ENCODE measurements at regions of chr6 and their contacts with region 1.

Region 1: GRCh38 chr6:13336553-13336952 is 8.2 kb upstream of the TBC1D7 start:
- DNase-seq: peak; percentile 95
- H3K4me3 ChIP-seq: no peak overlapping the region
- H3K27ac ChIP-seq: peak overlapping the region; percentile 43
- H3K4me1 ChIP-seq: peaks cover 9% of the 10 kb centered on the region
- H3K27me3 ChIP-seq: no peaks in the 10 kb centered on the region
- CTCF ChIP-seq: peak; percentile 80 to 88

Region 2: DNA sequence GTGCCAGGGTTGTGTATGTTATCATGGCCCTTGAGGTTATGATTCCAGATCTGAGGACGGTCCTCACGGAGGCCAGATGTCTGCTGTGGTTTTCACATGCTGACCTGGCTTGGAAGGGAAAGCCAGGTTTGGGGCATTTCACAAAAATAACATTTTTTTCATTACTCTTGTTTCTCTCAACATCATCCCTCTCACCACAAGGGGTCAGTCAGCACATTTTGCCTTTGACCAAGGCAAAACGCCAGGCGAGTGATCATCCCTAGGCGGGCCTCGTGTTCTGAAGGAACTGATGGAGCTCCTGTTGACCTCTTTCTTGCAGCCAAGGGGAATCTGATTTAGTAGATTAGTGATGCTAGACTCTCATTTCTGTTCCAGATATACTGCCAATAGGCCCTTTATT is 141.7 kb before region 1 on chr6:
- CTCF ChIA-PET with region 1: no interaction called
- dilution Hi-C with region 1: no loop called
- in situ Hi-C with region 1: loop called in 1 of 2 experiments (anchors 10 kb)
- intact Hi-C with region 1: loop called (anchors 1 kb)
- DNase-seq: peak; percentile 14
- H3K4me3 ChIP-seq: no peak overlapping the region
- H3K27ac ChIP-seq: no peak overlapping the region
- H3K4me1 ChIP-seq: no peaks in the 10 kb centered on the region
- H3K27me3 ChIP-seq: no peaks in the 10 kb centered on the region
- CTCF ChIP-seq: peak; percentile 39 to 67

Region 3: DNA sequence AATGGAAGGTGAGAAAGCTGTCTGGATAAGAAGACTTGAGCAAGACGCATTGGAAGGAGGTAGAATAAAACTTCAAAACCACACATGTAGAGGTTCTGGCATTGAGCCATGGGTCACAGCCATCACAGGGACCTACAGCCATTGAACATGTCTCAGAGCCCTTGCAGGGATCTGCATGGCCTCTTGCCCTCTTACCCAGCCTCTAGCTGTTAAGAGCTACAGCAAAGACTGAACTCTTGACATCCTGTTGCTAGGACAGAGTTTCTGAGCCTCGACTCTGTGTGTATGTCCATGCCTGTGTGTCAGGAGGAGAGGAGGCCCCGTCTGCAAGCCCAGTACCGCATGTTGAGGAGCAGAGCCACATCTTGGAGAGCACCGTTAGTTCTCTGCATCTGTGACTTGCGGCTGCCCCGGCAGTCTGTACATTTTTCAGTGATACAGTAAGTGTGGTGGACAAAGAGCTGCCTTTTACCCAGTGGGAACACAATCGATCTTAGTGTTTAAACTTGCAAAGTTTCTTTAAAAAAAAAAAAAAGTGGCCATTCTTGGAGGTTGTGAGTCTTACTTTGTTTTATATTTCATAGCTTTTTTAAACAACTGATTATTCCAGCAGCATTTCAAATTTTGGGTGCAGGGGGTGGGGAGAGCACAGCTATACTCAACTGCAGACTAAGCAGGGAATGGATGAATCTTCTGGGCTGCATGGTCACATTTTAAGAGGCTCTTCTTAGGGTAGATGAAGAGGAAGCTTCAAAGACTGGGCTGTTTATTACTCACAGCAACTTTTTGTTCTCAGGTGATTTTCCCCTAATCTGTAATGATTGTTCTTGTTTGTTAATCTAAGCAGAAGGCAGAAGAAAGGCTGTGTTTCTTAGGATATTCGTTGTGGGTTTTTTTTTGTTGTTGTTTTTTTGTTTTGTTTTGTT is 96.8 kb before region 1 on chr6:
- CTCF ChIA-PET with region 1: no interaction called
- dilution Hi-C with region 1: no loop called
- in situ Hi-C with region 1: no loop called
- intact Hi-C with region 1: no loop called
- DNase-seq: no peak
- H3K4me3 ChIP-seq: no peak overlapping the region
- H3K27ac ChIP-seq: no peak overlapping the region
- H3K4me1 ChIP-seq: no peaks in the 10 kb centered on the region
- H3K27me3 ChIP-seq: no peaks in the 10 kb centered on the region
- CTCF ChIP-seq: no peak

Region 4: DNA sequence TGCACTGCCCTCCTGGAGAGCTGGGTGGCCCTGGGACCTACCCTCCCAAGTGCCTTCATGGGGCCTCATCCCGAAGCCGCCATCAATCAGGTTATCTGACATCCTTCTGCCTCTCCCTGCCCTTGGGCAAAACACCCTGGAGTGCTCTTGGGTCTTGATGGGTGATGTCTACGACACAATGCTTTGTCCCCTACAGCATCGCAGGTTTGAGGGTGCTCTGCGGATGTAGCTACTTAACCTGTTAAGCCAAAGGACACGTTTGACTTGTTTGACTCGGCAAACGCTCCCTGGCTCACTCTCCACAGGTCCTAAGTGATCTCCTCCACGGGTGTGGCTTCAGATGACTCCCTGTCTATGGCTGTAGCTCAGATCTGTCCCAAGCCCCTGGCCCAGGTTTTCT is 43.8 kb before region 1 on chr6:
- CTCF ChIA-PET with region 1: no interaction called
- dilution Hi-C with region 1: no loop called
- in situ Hi-C with region 1: no loop called
- intact Hi-C with region 1: no loop called
- DNase-seq: no peak
- H3K4me3 ChIP-seq: no peak overlapping the region
- H3K27ac ChIP-seq: no peak overlapping the region
- H3K4me1 ChIP-seq: no peaks in the 10 kb centered on the region
- H3K27me3 ChIP-seq: no peaks in the 10 kb centered on the region
- CTCF ChIP-seq: no peak

Region 5: GRCh38 chr6:13302751-13303667 is 33.5 kb before region 1 on chr6:
- CTCF ChIA-PET with region 1: no interaction called
- dilution Hi-C with region 1: no loop called
- in situ Hi-C with region 1: no loop called
- intact Hi-C with region 1: no loop called
- DNase-seq: peak; percentile 80
- H3K4me3 ChIP-seq: no peak overlapping the region
- H3K27ac ChIP-seq: no peak overlapping the region
- H3K4me1 ChIP-seq: peaks cover 11% of the 10 kb centered on the region
- H3K27me3 ChIP-seq: no peaks in the 10 kb centered on the region
- CTCF ChIP-seq: no peak

Region 6: DNA sequence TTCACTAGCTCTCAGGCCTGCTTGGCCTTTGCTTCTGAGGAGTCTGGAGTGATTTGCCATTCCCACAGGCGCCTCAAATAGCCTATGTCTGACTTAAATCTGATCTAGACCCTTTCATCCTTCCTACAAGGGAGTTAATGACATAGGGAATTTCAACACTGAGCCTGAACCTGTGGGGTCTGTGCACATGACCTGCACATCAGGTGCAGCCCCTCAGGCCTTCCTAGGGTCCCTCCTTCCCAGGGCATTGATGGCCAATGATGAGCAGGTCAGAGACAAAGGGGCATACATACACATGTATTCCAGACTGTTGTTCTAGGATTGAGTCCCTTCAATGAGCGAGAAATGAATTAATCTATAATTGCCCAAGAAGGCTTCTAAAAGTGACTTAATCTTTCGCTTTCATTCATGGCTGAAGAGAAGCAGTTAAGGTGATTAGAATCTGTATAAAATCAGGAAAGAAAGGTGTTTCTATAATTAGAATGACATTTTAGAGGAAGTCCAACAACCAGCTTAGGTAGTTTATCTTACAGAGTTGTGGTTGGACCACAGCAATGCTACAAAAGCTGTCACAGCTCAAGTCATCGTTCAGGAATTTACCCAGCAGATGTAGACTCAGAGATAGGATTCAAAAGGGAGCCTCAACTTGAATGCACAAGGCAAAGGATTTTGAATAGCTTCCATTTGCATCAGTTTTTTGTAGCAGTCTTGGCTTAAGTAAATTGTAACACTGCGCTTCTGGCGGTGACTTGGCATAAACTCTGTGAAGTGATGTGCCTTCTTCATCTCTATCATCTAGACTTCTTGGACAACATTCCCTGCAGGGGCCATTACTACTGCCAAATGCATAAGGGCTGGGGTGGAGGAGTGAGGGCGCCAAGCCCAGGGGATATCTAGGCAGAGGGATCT is 18.7 kb after region 1 on chr6:
- CTCF ChIA-PET with region 1: no interaction called
- dilution Hi-C with region 1: no loop called
- in situ Hi-C with region 1: no loop called
- intact Hi-C with region 1: loop called (anchors 2 kb)
- DNase-seq: peak; percentile 92
- H3K4me3 ChIP-seq: peak overlapping the region in 1 of 3 experiments; percentile 3
- H3K27ac ChIP-seq: peak overlapping the region; percentile 84
- H3K4me1 ChIP-seq: peaks cover 40% of the 10 kb centered on the region
- H3K27me3 ChIP-seq: no peaks in the 10 kb centered on the region
- CTCF ChIP-seq: no peak

Region 7: GRCh38 chr6:13368731-13369115 is 32.2 kb after region 1 on chr6:
- CTCF ChIA-PET with region 1: no interaction called
- dilution Hi-C with region 1: no loop called
- in situ Hi-C with region 1: no loop called
- intact Hi-C with region 1: no loop called
- DNase-seq: peak; percentile 78
- H3K4me3 ChIP-seq: no peak overlapping the region
- H3K27ac ChIP-seq: no peak overlapping the region
- H3K4me1 ChIP-seq: peaks cover 25% of the 10 kb centered on the region
- H3K27me3 ChIP-seq: no peaks in the 10 kb centered on the region
- CTCF ChIP-seq: no peak

Region 8: DNA sequence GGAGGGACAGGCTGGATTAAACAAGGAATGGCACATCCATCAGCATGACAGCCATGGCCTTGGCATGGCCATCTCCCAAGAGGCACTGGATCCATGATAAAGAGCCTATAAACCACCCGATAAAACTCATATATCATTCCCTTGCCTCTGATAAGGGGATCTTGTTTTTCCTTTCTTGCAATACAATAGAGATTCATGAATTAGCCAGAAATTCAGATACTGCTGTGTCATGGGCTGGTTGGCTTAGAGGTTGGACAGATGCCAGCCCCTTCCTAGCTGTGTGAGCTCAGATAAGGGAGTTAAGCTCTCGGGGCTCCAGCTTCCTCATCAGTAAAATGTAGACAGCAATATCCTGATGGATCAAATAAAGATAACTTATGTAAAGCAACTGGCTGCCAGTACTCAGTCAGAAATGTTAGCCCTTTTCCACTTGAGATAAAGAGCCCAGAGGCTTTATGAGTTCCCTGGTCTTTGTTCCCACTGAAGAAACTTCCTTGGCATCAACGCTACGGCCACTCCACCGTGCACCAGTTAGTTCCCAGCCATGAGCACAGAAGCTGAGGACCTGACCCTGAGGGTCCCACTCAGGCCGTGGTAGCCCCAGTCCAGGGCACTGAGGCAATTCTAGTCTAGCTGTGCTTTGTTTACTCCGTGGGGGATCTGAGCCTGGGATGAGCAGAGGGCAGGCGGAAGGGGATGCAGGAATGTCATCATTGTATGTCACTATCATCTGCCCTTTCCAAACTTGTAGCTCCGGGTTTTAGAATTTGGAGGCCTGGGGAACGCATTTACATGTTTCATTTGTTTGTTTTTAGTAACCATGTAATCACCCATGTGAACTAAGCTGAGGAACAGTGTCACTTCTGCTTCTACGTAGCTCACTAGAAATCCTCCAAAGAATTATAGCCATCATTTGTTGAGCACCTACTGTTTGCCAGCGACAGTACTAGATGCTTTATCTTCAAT is 59.0 kb after region 1 on chr6:
- CTCF ChIA-PET with region 1: no interaction called
- dilution Hi-C with region 1: no loop called
- in situ Hi-C with region 1: no loop called
- intact Hi-C with region 1: loop called (anchors 2 kb)
- DNase-seq: no peak
- H3K4me3 ChIP-seq: no peak overlapping the region
- H3K27ac ChIP-seq: no peak overlapping the region
- H3K4me1 ChIP-seq: peaks cover 19% of the 10 kb centered on the region
- H3K27me3 ChIP-seq: no peaks in the 10 kb centered on the region
- CTCF ChIP-seq: no peak

Region 9: GRCh38 chr6:13487122-13488014 is 150.8 kb after region 1 on chr6 and contains the start of gene GFOD1:
- CTCF ChIA-PET with region 1: no interaction called
- dilution Hi-C with region 1: no loop called
- in situ Hi-C with region 1: no loop called
- intact Hi-C with region 1: loop called (anchors 1 kb)
- DNase-seq: peak; percentile 85
- H3K4me3 ChIP-seq: peak within 1 kb of the TSS; percentile 66 to 73 (median 70)
- H3K27ac ChIP-seq: peak within 1 kb of the TSS; percentile 61
- H3K4me1 ChIP-seq: peaks cover 22% of the 10 kb centered on the region
- H3K27me3 ChIP-seq: no peaks in the 10 kb centered on the region
- CTCF ChIP-seq: peak in 1 of 2 donors; percentile 35
- total RNA-seq, gene GFOD1: 12.3 to 37.3 TPM

Region 10: DNA sequence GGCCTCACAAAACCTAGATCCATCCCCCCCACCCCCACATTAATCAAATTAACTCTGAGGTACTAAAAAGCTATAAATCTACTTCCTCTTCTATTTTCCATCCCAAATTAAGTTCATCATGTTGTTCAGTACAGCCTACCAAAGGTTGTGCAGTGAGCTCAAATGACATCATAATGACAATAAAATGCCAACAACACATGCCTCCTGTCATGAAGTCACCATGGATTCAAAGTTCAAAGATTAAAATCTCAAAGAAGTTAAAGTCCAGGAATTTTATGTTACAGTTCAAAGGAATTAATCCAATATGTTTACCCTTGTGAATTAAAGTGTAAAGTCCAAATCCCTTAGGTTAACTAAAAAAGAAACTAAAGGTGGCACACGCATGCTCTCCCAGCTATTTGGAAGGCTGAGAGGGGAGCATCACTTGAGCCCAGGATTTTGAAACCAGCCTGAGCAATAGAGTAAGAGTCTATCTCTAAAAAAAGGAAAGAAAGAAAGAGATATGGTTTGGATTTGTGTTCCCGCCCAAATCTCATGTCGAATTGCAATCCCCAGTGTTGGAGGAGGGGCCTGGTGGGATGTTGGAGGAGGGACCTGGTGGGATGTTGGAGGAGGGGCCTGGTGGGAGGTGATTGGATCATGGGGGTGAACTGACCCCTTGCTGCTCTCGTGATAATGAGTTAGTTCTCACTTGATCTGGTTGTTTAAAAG is 212.1 kb after region 1 on chr6:
- CTCF ChIA-PET with region 1: interaction called, 5 read pairs
- dilution Hi-C with region 1: no loop called
- in situ Hi-C with region 1: loop called in 1 of 2 experiments (anchors 10 kb)
- intact Hi-C with region 1: no loop called
- DNase-seq: no peak
- H3K4me3 ChIP-seq: no peak overlapping the region
- H3K27ac ChIP-seq: no peak overlapping the region
- H3K4me1 ChIP-seq: no peaks in the 10 kb centered on the region
- H3K27me3 ChIP-seq: no peaks in the 10 kb centered on the region
- CTCF ChIP-seq: no peak

Region 11: GRCh38 chr6:13614926-13615798 is 278.6 kb after region 1 on chr6 and contains the start of gene NOL7:
- CTCF ChIA-PET with region 1: no interaction called
- dilution Hi-C with region 1: no loop called
- in situ Hi-C with region 1: loop called in 1 of 2 experiments (anchors 25 kb)
- intact Hi-C with region 1: loop called (anchors 1 kb)
- DNase-seq: peak; percentile 95
- H3K4me3 ChIP-seq: peak within 1 kb of the TSS; percentile 66 to 85 (median 81)
- H3K27ac ChIP-seq: peak within 1 kb of the TSS; percentile 77
- H3K4me1 ChIP-seq: peaks cover 10% of the 10 kb centered on the region
- H3K27me3 ChIP-seq: no peaks in the 10 kb centered on the region
- CTCF ChIP-seq: peak; percentile 95
- total RNA-seq, gene NOL7: 20.3 to 70.0 TPM

Measured in mammary epithelial cell (primary cell).